HEK293 (cell line): ENCODE measurements at regions of chr7 and their contacts with region 1.

Region 1: GRCh38 chr7:29189743-29190201 is 4.8 kb upstream of the CHN2 start:
- H3K4me3 ChIP-seq: no peak overlapping the region
- H3K27ac ChIP-seq: peak overlapping the region; percentile 30; the same call in 1 of the 2 replicates
- H3K4me1 ChIP-seq: peaks cover 11% of the 10 kb centered on the region
- CTCF ChIP-seq: peak; percentile 58

Region 2: GRCh38 chr7:29039821-29040578 is 149.8 kb before region 1 on chr7:
- CTCF ChIA-PET with region 1: no interaction called
- POLR2A ChIA-PET with region 1: no interaction called
- H3K4me3 ChIP-seq: no peak overlapping the region
- H3K27ac ChIP-seq: no peak overlapping the region
- H3K4me1 ChIP-seq: no peaks in the 10 kb centered on the region
- CTCF ChIP-seq: no peak

Region 3: DNA sequence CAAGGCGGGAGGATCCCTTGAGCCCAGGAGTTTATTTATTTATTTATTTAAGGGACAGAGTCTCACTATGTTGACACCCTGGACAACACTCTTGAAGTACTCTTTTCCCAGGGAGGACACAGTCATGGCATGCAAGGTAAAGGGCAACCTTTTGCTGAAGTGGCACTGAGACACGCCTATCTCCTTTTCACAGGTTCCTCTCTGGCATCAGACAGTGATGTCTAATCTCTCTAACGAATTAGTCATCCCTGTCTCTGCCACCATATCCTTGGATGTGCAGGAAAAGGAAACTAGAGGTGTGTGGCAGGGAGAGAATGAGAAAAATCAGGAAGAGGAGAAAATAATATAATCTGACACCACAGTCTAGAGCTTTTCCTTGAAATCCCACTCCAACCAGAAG is 63.0 kb before region 1 on chr7:
- CTCF ChIA-PET with region 1: interaction called, 10 read pairs
- POLR2A ChIA-PET with region 1: interaction called, 3 read pairs
- H3K4me3 ChIP-seq: no peak overlapping the region
- H3K27ac ChIP-seq: no peak overlapping the region
- H3K4me1 ChIP-seq: peaks cover 19% of the 10 kb centered on the region
- CTCF ChIP-seq: no peak

Region 4: DNA sequence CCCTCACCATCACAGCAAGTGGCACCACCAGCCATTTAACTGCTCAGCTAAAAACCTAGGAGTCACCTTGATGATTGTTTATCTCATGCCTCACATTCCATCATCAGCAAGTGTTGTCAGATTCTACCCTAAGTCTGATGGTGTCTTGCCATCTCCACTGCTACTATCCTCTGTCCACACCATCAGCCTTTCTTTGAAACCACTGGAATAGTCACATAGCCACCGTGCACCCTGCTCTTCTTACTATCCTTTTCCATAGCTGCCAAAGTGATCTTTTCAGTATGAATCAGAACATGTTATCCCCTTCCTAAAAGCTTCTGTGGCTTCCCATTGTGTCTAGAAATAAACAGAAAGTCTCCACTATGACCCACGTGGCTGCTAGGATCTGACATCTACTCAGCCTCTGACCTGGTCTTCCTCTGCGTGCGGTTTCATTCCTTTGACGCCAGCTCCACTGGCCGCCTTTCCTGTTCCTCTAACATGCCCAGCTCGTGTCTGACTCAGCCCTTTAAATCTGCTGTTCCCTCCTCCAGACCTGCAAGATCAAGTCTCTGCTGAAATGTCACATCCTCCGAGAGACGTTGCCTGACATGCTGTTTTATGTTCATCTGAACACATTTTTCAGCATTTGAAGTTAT is 11.7 kb before region 1 on chr7:
- CTCF ChIA-PET with region 1: interaction called, 22 read pairs
- POLR2A ChIA-PET with region 1: no interaction called
- H3K4me3 ChIP-seq: no peak overlapping the region
- H3K27ac ChIP-seq: no peak overlapping the region
- H3K4me1 ChIP-seq: no peaks in the 10 kb centered on the region
- CTCF ChIP-seq: no peak

Region 5: DNA sequence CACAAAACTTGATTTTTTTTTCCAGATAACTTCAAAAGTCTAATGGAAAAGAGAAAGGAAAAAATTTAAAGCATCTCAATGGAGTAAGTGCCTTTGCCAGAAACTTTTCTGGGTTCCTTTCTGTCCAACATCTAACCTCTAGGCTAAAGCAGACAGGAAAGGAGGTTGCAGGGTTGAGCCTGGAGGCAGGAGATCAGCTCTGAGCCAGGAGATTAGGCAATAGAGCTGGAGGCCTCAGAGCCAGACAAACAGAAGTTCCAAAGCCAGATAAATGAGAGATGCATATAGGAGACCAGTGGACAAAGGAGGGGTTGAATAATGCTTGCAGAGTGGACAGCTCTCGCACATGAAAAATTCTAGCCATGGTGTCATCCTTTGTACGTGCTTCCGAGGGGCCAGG is 47.7 kb after region 1 on chr7:
- CTCF ChIA-PET with region 1: interaction called, 12 read pairs
- POLR2A ChIA-PET with region 1: interaction called, 6 read pairs
- H3K4me3 ChIP-seq: no peak overlapping the region
- H3K27ac ChIP-seq: no peak overlapping the region
- H3K4me1 ChIP-seq: peaks cover 1% of the 10 kb centered on the region; the same call in 1 of the 2 replicates
- CTCF ChIP-seq: no peak

Region 6: GRCh38 chr7:29345600-29345999 is 155.8 kb after region 1 on chr7:
- CTCF ChIA-PET with region 1: interaction called, 13 read pairs
- POLR2A ChIA-PET with region 1: no interaction called
- H3K4me3 ChIP-seq: no peak overlapping the region
- H3K27ac ChIP-seq: no peak overlapping the region
- H3K4me1 ChIP-seq: peaks cover 9% of the 10 kb centered on the region
- CTCF ChIP-seq: peak; percentile 42

Region 7: GRCh38 chr7:29878081-29878688 is 688.4 kb after region 1 on chr7:
- CTCF ChIA-PET with region 1: no interaction called
- POLR2A ChIA-PET with region 1: no interaction called
- H3K4me3 ChIP-seq: no peak overlapping the region
- H3K27ac ChIP-seq: no peak overlapping the region
- H3K4me1 ChIP-seq: no peaks in the 10 kb centered on the region
- CTCF ChIP-seq: no peak